Posterior vena cava (tissue), 2 donors: ENCODE measurements at regions of chr10 and their contacts with region 1.

Region 1: DNA sequence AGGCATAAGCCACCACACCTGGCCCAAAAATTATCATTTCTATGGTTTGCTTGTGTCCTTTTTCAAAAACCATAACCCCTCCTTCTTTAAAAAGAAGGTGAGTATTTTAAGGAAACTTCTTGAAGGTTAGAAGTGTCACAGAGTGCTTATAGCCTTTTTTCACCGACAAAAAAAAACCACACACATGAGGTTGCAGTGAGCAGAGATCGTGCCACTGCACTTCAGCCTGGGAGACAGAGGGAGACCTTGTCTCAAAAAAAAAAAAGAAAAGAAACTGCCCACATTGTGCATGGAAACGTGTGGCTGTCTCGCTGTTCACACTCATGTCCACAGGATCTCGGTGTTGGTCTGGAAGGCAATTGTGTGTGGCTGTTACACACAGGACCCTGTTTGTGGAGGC is 157.4 kb upstream of the PFKP start:
- DNase-seq: no peak

Region 2: DNA sequence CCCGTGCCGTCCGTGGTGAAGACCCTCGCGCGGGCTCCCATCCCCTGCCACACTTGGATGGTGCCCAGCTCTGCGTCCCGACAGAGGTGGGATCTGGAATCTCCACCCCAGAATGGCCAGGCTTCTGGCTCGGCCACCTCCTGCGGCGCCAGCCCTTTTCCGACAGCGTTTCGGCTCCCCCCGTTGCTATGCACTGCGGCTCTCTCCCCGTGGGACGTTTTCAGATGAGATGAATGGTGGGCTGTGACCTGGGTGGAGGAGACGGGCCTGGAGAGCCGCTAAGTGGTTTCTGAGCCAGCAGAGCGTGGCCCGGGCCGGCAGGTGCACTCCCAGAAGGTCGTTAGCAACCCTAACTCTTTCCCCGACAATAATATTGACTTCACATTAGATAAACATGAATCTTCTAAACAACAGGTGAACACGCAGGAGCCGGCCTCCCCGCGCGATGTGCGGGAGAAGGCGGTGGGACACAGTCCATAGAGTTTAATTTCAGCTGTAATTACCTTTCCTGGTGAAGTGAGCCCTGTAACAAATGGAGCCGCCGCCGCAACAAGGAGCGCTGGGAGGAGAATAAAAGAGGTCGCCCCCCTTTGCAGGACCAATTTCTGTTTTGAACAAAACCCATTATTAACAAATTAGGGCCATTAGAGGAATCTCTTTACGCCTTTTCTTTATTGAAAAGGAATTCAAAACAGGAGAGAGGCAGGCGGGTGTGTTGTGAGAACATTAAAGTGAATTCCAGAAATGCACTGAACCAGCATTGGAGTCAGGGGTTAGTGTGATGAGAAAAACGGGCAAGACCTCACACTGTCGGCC is 136.9 kb before region 1 on chr10:
- intact Hi-C with region 1: no loop called
- DNase-seq: no peak

Region 3: GRCh38 chr10:2921956-2922680 is 12.2 kb after region 1 on chr10:
- intact Hi-C with region 1: loop called in 1 of 2 experiments (anchors 1 kb)
- DNase-seq: no peak